Endothelial cell of umbilical vein (primary cell): ENCODE measurements at regions of chr5 and their contacts with region 1.

Region 1: GRCh38 chr5:54832858-54833257 is 152.5 kb downstream of the ESM1 start:
- DNase-seq: no peak
- H3K4me3 ChIP-seq: no peak overlapping the region
- H3K27ac ChIP-seq: no peak overlapping the region
- H3K4me1 ChIP-seq: peaks cover 40% of the 10 kb centered on the region
- H3K27me3 ChIP-seq: no peaks in the 10 kb centered on the region
- CTCF ChIP-seq: no peak
- POLR2A ChIP-seq: no peak

Region 2: GRCh38 chr5:53438486-53439472 is 1394.1 kb before region 1 on chr5:
- CTCF ChIA-PET with region 1: no interaction called
- POLR2A ChIA-PET with region 1: no interaction called
- dilution Hi-C with region 1: no loop called
- intact Hi-C with region 1: no loop called
- DNase-seq: no peak
- H3K4me3 ChIP-seq: no peak overlapping the region
- H3K27ac ChIP-seq: no peak overlapping the region
- H3K4me1 ChIP-seq: no peaks in the 10 kb centered on the region
- H3K27me3 ChIP-seq: no peaks in the 10 kb centered on the region
- CTCF ChIP-seq: no peak
- POLR2A ChIP-seq: no peak

Region 3: GRCh38 chr5:54646356-54647101 is 186.3 kb before region 1 on chr5:
- CTCF ChIA-PET with region 1: no interaction called
- POLR2A ChIA-PET with region 1: no interaction called
- dilution Hi-C with region 1: no loop called
- intact Hi-C with region 1: loop called (anchors 10 kb)
- DNase-seq: peak; percentile 73
- H3K4me3 ChIP-seq: no peak overlapping the region
- H3K27ac ChIP-seq: no peak overlapping the region
- H3K4me1 ChIP-seq: peaks cover 23% of the 10 kb centered on the region
- H3K27me3 ChIP-seq: no peaks in the 10 kb centered on the region
- CTCF ChIP-seq: no peak
- POLR2A ChIP-seq: no peak

Region 4: GRCh38 chr5:54807421-54807820 is 25.4 kb before region 1 on chr5:
- CTCF ChIA-PET with region 1: no interaction called
- POLR2A ChIA-PET with region 1: no interaction called
- dilution Hi-C with region 1: no loop called
- intact Hi-C with region 1: loop called (anchors 1 kb)
- DNase-seq: peak; percentile 84
- H3K4me3 ChIP-seq: no peak overlapping the region
- H3K27ac ChIP-seq: peak overlapping the region; percentile 80
- H3K4me1 ChIP-seq: peaks cover 13% of the 10 kb centered on the region
- H3K27me3 ChIP-seq: no peaks in the 10 kb centered on the region
- CTCF ChIP-seq: no peak
- POLR2A ChIP-seq: no peak

Region 5: DNA sequence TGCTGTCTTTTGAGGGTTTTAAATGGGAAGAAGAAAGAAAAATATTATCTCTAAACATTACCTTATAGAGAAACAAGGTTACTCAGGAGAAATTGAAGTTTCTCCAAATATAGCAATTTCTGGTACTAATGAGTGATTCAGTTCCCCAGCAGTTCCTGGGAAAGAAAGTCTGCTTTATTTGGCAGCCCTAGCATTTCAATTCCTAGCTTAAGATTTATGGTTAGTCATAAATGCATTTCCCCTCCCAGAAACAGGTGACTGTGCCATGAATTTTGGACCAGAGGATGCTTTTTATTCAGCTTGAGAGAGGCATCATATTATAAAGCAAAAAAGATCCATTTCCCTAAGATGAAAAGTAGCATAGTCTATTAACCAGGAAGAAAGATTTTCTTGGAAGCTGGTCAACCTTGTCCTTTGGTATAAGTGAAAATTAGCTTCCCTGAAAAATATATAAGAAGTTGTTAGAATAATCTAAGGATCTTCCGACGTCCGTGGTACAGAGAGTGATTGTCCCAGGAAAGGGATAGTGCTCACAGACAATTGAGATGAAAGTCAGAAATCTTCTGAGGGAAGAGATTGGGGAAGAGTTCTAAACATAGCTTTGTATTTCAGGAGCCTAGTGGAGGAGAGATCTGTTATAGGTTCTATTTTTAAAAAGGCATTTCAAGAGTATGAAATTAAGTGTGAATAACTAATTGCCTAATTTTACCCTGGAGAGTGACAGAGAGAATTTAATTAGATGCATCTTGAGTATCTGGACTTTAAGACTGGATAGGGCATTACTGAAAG is 12.3 kb before region 1 on chr5:
- CTCF ChIA-PET with region 1: interaction called, 5 read pairs
- POLR2A ChIA-PET with region 1: no interaction called
- dilution Hi-C with region 1: no loop called
- intact Hi-C with region 1: loop called (anchors 1 kb)
- DNase-seq: peak; percentile 85
- H3K4me3 ChIP-seq: no peak overlapping the region
- H3K27ac ChIP-seq: peak overlapping the region; percentile 32
- H3K4me1 ChIP-seq: peaks cover 19% of the 10 kb centered on the region
- H3K27me3 ChIP-seq: no peaks in the 10 kb centered on the region
- CTCF ChIP-seq: no peak
- POLR2A ChIP-seq: no peak